AG04450 (cell line): ENCODE measurements at regions of chr15 and their contacts with region 1.

Region 1: DNA sequence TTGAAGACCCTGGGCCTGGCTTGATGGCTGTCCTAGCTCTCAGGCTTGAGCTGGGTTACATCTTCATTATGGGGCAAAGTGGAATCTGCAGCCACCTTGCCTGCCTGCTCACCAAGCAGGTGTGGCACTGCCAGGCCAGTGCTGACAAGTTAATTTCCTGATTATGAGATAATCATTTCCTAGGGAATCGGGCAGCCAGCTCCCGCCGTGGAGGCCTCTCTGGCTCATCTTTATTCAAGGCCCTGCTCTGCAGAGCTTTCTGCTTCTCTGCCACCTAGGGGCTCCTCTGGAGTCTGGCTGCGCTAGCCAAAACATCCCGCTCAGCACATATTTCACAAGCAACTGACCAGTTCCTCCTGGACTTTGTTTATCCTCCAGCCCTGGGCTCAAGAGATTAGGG is 9.9 kb downstream of the LOXL1 start:
- DNase-seq: no peak
- H3K4me3 ChIP-seq: no peak overlapping the region
- H3K27ac ChIP-seq: peak overlapping the region; percentile 47
- H3K27me3 ChIP-seq: no peaks in the 10 kb centered on the region
- CTCF ChIP-seq: peak; percentile 57

Region 2: GRCh38 chr15:73786518-73786917 is 149.7 kb before region 1 on chr15:
- CTCF ChIA-PET with region 1: no interaction called
- POLR2A ChIA-PET with region 1: no interaction called
- DNase-seq: no peak
- H3K4me3 ChIP-seq: no peak overlapping the region
- H3K27ac ChIP-seq: no peak overlapping the region
- H3K27me3 ChIP-seq: peaks cover 59% of the 10 kb centered on the region
- CTCF ChIP-seq: no peak

Region 3: GRCh38 chr15:73856458-73857192 is 79.6 kb before region 1 on chr15:
- CTCF ChIA-PET with region 1: no interaction called
- POLR2A ChIA-PET with region 1: no interaction called
- DNase-seq: no peak
- H3K4me3 ChIP-seq: no peak overlapping the region
- H3K27ac ChIP-seq: no peak overlapping the region
- H3K27me3 ChIP-seq: peaks cover 25% of the 10 kb centered on the region
- CTCF ChIP-seq: no peak

Region 4: GRCh38 chr15:73950831-73951561 is 14.8 kb after region 1 on chr15:
- CTCF ChIA-PET with region 1: interaction called, 11 read pairs
- POLR2A ChIA-PET with region 1: interaction called, 6 read pairs
- DNase-seq: peak; percentile 86
- H3K4me3 ChIP-seq: no peak overlapping the region
- H3K27ac ChIP-seq: peak overlapping the region; percentile 82
- H3K27me3 ChIP-seq: no peaks in the 10 kb centered on the region
- CTCF ChIP-seq: peak; percentile 87